Activated T-helper 1 cell treated with anti-CD3 and anti-CD28 coated beads, Interleukin-12 subunit alpha, Interleukin-12 subunit beta, Interleukin-2, Interleukin-4 antibody, amounts not matched to agents 30 ng/mL and 10 ng/mL and 1 ng/mL, durations not matched to agents 14 hours and 24 hours and 36 hours (primary cell): ENCODE measurements at regions of chr14 and their contacts with region 1.

Region 1: DNA sequence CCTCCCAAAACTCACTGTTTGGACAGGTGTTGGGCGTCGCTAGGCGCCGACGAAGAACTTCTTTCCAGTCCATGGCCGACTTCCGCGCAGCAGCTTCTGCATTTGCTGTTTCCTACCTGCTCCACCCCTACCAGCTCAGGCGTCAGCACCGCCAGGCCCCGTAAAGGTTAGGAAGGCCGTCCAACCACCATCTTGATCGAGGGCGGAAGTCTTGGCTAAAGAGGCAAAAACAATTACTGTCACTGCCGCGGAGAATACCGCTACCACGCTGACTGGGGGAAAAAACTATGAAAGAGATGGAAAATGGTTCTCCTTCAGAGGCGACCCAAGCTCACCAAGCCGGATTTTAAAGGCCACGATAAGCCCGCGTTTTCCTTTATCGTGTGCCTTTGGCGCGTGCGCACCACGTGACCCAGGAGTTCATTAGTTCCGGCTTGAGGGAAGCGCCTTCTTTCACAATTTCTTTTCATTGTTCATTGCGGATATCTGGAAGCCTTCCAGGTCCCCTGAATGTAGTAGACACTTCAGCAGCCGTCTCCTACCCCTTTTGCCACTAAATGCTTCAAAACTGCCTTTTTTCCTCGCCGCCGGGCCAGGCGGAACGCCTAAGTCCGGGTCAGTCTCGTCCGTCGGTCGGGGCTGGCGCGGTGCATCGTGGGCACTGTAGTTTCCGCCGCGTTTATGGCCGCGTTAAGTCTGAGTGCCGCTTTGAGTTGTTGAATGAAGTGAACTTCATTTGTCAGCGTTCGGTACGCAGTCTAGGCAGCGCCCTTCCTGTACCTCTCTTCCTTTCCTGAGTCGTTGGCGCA is at the starts of genes PPP2R3C and PRORP:
- DNase-seq: peak; percentile 88
- H3K4me3 Mint-ChIP-seq: peak within 1 kb of the TSS; percentile 97
- H3K27ac Mint-ChIP-seq: peak within 1 kb of the TSS; percentile 100
- H3K4me1 Mint-ChIP-seq: peaks cover 61% of the 10 kb centered on the region
- H3K27me3 Mint-ChIP-seq: no peaks in the 10 kb centered on the region
- total RNA-seq, gene PPP2R3C: 48.2 and 52.4 TPM in 2 replicates
- total RNA-seq, gene PRORP: 34.1 and 38.0 TPM in 2 replicates

Region 2: GRCh38 chr14:34629657-34630529 is 492.2 kb before region 1 on chr14 and contains the start of gene SNX6:
- intact Hi-C with region 1: loop called (anchors 2 kb)
- DNase-seq: peak; percentile 76
- H3K4me3 Mint-ChIP-seq: peak within 1 kb of the TSS; percentile 95
- H3K27ac Mint-ChIP-seq: peak within 1 kb of the TSS; percentile 99
- H3K4me1 Mint-ChIP-seq: peaks cover 8% of the 10 kb centered on the region
- H3K27me3 Mint-ChIP-seq: peaks cover 11% of the 10 kb centered on the region
- total RNA-seq, gene SNX6: 70.3 and 75.6 TPM in 2 replicates

Region 3: GRCh38 chr14:34982417-34983147 is 139.5 kb before region 1 on chr14 and contains the start of gene SRP54:
- intact Hi-C with region 1: loop called (anchors 1 kb)
- DNase-seq: peak; percentile 100
- H3K4me3 Mint-ChIP-seq: no peak within 1 kb of the TSS
- H3K27ac Mint-ChIP-seq: no peak within 1 kb of the TSS
- H3K4me1 Mint-ChIP-seq: peaks cover 6% of the 10 kb centered on the region
- H3K27me3 Mint-ChIP-seq: no peaks in the 10 kb centered on the region
- total RNA-seq, gene SRP54: 76.1 and 76.2 TPM in 2 replicates

Region 4: DNA sequence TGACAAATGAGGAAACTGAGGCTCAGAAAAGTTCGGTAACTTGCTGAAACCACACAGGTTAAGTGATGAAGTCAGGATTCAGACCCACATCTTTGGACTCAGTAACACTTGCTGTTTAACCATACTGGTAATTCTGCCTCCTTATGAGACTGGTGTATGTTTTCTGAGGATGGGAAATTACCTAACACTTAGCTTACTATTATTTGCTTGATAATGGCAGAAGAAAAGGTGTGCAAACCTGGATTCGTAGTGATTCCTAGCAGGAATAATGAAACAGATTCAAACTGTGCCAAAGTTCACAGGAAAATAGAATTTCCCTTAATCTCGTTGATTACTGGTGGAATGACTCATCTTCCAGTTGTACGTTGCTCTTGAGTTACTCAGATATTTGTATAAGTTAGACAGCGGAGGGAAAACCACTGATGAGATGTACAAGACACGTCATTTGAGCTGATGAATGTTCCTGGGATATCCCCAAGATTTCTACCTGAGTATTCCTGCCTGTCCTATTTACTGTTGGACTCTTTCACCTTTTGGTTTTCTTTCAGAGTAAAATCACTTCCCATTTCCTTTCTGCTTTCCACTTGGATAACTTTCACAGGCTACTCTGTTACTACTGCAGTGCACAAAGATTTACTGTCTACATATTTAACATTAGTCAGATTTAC is 37.8 kb after region 1 on chr14:
- intact Hi-C with region 1: loop called (anchors 2 kb)
- DNase-seq: no peak
- H3K4me3 Mint-ChIP-seq: peak overlapping the region; percentile 5
- H3K27ac Mint-ChIP-seq: peak overlapping the region; percentile 81
- H3K4me1 Mint-ChIP-seq: peaks cover 67% of the 10 kb centered on the region
- H3K27me3 Mint-ChIP-seq: no peaks in the 10 kb centered on the region

Region 5: DNA sequence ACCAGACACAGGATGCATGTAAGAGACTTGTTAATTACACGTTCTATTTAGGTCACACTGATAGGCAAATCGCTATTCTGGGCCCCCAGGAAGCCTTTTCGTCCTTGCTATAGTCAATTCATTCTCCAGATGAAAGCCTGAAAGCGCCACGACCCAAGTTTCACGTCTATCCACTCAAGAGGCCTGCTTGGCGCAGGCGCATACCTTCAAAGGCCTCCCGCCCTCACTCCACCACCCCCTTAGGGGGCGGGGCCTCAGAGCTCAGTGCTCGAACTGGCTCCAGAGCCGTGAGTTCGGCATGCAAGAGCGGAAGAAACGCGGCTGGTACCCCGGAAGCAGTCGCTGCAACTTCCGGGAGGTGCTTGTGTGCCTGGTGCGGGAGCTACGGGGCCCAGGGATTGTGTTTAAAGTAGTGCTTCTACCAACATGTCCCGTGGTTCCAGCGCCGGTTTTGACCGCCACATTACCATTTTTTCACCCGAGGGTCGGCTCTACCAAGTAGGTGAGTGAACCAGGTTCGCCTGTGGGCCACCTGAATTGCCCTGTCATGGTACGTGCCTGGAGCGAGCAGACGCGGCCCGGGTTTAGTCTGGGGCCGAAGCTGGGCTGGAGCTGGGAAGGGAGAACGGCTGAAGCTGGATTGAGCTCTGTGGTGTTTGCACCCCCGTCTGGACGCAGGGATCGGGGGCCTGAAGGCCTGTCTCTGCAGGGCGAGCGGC is 170.1 kb after region 1 on chr14 and contains the start of gene PSMA6:
- intact Hi-C with region 1: loop called (anchors 1 kb)
- DNase-seq: peak; percentile 99
- H3K4me3 Mint-ChIP-seq: peak within 1 kb of the TSS; percentile 99
- H3K27ac Mint-ChIP-seq: peak within 1 kb of the TSS; percentile 94
- H3K4me1 Mint-ChIP-seq: peaks cover 56% of the 10 kb centered on the region
- H3K27me3 Mint-ChIP-seq: no peaks in the 10 kb centered on the region
- total RNA-seq, gene PSMA6: 475 and 479 TPM in 2 replicates

Region 6: DNA sequence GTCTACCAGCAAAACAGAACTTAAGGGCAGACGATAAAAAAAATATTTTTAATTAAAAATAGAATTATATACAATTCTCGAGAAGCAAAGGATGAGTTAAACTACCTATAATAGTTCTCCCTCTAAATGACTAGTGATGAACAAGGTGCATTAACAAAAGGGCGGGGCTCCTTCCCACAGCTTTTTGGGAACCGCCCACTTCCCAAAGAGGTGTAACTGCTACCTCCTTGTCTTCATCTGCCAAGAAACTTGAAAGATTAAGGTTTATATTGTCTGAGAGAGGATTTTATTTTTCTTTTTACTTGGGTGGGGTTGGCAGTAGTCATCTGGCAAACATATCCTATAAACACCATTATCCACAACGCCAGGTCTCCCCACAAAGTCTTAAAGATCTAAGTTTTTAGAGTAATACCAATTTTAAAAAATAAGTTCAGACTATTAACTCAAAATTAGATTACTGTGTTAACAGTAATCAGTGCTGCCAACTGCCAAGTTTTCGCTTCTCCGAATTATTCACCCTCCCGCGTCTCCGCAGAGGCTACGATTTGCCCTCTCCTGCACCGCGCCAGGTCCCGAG is 686.1 kb after region 1 on chr14:
- intact Hi-C with region 1: loop called (anchors 5 kb)
- DNase-seq: no peak
- H3K4me3 Mint-ChIP-seq: peak overlapping the region; percentile 100
- H3K27ac Mint-ChIP-seq: peak overlapping the region; percentile 97
- H3K4me1 Mint-ChIP-seq: peaks cover 29% of the 10 kb centered on the region
- H3K27me3 Mint-ChIP-seq: peaks cover 3% of the 10 kb centered on the region

Region 7: GRCh38 chr14:36320200-36320896 is 1198.3 kb after region 1 on chr14 and contains the start of gene MBIP:
- intact Hi-C with region 1: loop called (anchors 10 kb)
- DNase-seq: peak; percentile 83
- H3K4me3 Mint-ChIP-seq: peak within 1 kb of the TSS; percentile 93
- H3K27ac Mint-ChIP-seq: peak within 1 kb of the TSS; percentile 92
- H3K4me1 Mint-ChIP-seq: peaks cover 41% of the 10 kb centered on the region
- H3K27me3 Mint-ChIP-seq: peaks cover 14% of the 10 kb centered on the region
- total RNA-seq, gene MBIP: 29.4 and 33.4 TPM in 2 replicates